Heart left ventricle (tissue), 16 donors: ENCODE measurements at regions of chr5 and their contacts with region 1.

Region 1: DNA sequence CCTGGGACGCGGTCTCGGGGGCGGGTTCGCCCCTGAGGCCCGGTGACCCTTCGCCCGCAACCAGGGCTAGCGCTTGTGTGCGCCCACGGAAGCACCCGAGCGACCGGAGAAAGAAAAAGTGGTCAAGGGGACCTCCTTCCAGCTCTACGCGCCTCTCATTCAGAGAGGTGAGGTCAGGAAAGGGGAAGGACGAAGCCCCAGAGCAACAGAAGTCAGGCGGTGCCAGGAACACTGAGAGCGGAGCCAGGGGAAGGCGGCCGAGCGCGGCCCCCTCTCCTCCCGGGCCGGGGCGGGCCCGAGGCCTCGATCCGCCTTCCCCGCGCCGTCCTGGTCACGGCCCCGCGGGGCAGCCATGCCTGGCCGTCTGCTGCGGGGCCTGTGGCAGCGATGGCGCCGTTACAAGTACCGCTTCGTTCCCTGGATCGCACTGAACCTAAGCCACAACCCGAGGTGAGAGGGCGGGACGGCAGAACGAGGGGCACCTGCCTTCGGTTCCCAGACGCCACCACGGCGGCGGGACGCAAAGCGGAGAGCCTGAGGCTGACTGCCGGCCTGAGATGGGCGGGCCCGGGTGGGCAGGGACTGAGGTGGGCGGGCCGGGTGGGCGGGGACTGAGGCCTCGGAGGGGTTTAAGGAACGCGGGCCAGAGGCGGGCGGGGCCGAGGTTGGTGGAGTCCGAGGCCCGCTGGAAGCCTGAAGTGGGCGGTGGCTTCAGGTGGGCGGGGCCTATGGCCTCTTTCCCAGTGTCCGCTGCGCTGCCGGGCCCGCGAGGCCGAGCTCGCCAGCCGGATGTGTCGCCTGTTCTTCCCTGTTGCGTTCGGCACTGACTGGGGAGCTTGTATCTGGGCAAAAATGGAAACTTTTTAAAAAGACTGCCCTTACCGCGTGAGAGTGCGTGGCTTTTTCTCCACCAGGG is at the start of gene SETD9:
- DNase-seq: peak; percentile 99 to 100 (median 99)
- ATAC-seq: peak; percentile 95 to 97 (median 97)
- H3K4me3 ChIP-seq: peak within 1 kb of the TSS; percentile 51 to 86 (median 68)
- H3K27ac ChIP-seq: peak within 1 kb of the TSS; percentile 85 to 99 (median 95)
- H3K4me1 ChIP-seq: peaks cover 0 to 16% (median 9%) of the 10 kb centered on the region in 12 donors
- H3K27me3 ChIP-seq: no peaks in the 10 kb centered on the region
- CTCF ChIP-seq: no peak
- POLR2A ChIP-seq: peak; percentile 28 to 75
- total RNA-seq, gene SETD9: 8.6 to 21.0 (median 14.0) TPM

Region 2: GRCh38 chr5:56951946-56952691 is 42.6 kb after region 1 on chr5 and contains the start of gene MIER3:
- intact Hi-C with region 1: loop called in 4 of 10 experiments (anchors 1 to 5 kb)
- DNase-seq: peak; percentile 85 to 88 (median 86)
- ATAC-seq: peak; percentile 79 to 98 (median 94)
- H3K4me3 ChIP-seq: peak within 1 kb of the TSS; percentile 73 to 97 (median 88)
- H3K27ac ChIP-seq: peak within 1 kb of the TSS; percentile 67 to 93 (median 84)
- H3K4me1 ChIP-seq: peaks cover 0 to 24% (median 16%) of the 10 kb centered on the region in 12 donors
- H3K27me3 ChIP-seq: peaks cover 0 to 20% (median 0%) of the 10 kb centered on the region in 9 donors
- CTCF ChIP-seq: no peak
- POLR2A ChIP-seq: no peak
- total RNA-seq, gene MIER3: 9.3 to 15.5 (median 10.8) TPM

Region 3: DNA sequence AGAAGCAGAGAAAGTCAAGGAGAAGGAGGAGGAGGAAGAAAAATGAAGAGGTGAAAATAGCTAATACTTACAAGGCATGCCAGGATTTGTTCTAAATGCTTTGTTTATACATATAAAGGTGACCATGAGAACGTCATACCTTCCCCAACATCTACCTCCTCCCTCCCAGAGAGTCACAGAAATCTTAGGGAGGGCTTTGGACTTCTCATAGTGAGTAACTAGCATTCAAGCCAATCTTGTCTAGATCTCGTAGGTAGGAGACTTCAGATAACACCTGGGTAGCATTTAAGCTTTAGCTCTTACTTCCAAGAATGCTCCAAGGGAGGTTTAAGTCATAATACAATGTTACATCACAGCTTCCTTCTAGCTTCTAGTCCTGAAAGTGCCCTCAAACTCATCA is 227.8 kb after region 1 on chr5:
- intact Hi-C with region 1: loop called in 7 of 10 experiments (anchors 5 to 10 kb)
- DNase-seq: no peak
- ATAC-seq: no peak
- H3K4me3 ChIP-seq: no peak overlapping the region
- H3K27ac ChIP-seq: no peak overlapping the region
- H3K4me1 ChIP-seq: no peaks in the 10 kb centered on the region
- H3K27me3 ChIP-seq: peaks cover 0 to 2% (median 0%) of the 10 kb centered on the region in 9 donors
- CTCF ChIP-seq: no peak
- POLR2A ChIP-seq: no peak

Region 4: DNA sequence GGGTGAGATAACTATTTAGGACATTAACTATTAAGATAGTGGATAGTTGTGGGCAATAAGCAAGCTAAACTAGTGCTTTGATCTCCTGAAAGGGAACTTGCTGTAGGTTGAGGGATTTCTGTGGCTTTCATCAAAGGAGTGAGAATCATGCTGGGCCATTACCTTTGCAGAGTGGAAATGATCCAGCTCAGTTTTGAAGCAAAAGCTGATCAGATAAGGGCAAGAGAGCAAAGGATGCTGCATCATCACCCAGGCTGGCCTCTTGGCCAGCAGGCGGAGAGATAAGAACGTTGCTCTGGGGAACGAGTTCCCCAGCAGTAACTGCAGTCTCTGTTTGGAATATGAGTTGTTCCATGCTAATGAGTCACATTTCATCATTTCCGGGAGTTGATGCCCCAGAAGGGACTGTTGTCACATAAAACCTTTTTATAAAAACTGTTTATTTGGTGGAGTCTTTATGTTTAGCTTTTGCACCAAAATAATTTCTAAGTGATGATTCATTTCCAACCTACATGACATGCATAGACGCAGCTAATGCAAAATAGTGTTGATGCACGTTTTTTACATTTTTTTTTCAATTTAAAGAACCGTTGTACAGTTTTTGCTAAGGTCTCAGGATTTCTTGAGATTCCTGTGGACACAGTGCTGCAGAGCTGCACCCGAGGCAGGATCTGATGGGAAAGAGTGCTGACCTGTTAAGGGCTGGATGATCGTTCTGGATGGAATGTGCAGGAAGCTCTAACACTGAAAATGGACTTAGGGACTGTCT is 473.7 kb after region 1 on chr5:
- intact Hi-C with region 1: no loop called
- DNase-seq: peak in 1 of 5 donors; percentile 33
- ATAC-seq: peak in 3 of 4 donors; percentile 54 to 70 (median 66)
- H3K4me3 ChIP-seq: no peak overlapping the region
- H3K27ac ChIP-seq: no peak overlapping the region
- H3K4me1 ChIP-seq: peaks cover 0 to 12% (median 0%) of the 10 kb centered on the region in 12 donors
- H3K27me3 ChIP-seq: no peaks in the 10 kb centered on the region
- CTCF ChIP-seq: peak in 3 of 12 donors; percentile 13 to 21 (median 20)
- POLR2A ChIP-seq: no peak

Region 5: DNA sequence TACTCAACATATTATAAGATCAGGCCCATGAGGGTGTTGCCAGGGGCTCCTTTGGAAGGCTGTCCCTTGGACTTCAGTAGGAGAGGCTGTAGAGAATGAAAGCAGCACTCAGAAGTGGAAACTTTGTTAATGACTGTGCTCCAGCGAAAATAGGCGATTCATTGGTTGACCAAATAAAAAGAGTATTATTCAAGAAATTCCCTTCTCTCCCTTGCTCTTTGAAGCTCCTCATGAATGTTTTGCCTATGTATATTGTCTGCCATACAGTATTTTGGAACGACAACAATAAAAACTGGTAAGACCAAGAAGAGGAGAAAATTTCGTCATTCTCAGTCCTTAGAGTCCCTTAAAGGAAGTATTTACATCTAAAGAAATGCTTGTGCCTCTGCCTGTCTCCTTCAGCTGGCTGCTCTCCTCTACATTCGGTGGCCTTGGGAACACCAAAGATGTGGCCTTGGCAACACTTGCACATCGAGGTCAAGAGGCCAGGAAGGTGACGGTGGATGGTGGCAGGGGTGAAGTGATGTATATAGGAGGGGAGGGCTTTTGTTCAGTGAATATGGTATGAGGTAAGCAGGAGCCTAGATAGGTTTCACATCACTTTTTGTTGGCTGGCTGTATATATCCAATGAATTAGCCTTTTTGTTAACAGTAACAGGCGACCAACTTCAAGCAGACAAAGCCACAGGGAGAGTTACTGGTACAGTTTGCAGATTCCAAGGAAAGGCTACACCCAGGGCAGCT is 668.1 kb after region 1 on chr5:
- intact Hi-C with region 1: no loop called
- DNase-seq: no peak
- ATAC-seq: no peak
- H3K4me3 ChIP-seq: no peak overlapping the region
- H3K27ac ChIP-seq: no peak overlapping the region
- H3K4me1 ChIP-seq: peaks cover 0 to 2% (median 0%) of the 10 kb centered on the region in 12 donors
- H3K27me3 ChIP-seq: no peaks in the 10 kb centered on the region
- CTCF ChIP-seq: no peak
- POLR2A ChIP-seq: no peak